Common myeloid progenitor, CD34-positive (primary cell): ENCODE measurements at regions of chr7 and their contacts with region 1.

Region 1: GRCh38 chr7:2436341-2437104 is 33.1 kb downstream of the CHST12 start:
- DNase-seq: no peak
- H3K4me3 ChIP-seq: no peak overlapping the region
- H3K27ac ChIP-seq: no peak overlapping the region
- H3K4me1 ChIP-seq: peaks cover 0 to 8% (median 0%) of the 10 kb centered on the region in 4 experiments
- H3K27me3 ChIP-seq: no peaks in the 10 kb centered on the region

Region 2: GRCh38 chr7:2451171-2452073 is 14.9 kb after region 1 on chr7:
- CTCF ChIA-PET with region 1: interaction called, 29 read pairs
- POLR2A ChIA-PET with region 1: no interaction called
- DNase-seq: peak; percentile 67 to 79 (median 77)
- H3K4me3 ChIP-seq: peak overlapping the region in 6 of 7 experiments; percentile 44 to 77 (median 60)
- H3K27ac ChIP-seq: peak overlapping the region in 1 of 2 experiments; percentile 14
- H3K4me1 ChIP-seq: peaks cover 0 to 15% (median 12%) of the 10 kb centered on the region in 4 experiments
- H3K27me3 ChIP-seq: no peaks in the 10 kb centered on the region